Dendritic cell treated with granulocyte-macrophage colony-stimulating factor and Interleukin-4, amounts not matched to agents 40 ng/mL and 50 ng/mL, for 4 days (primary cell): ENCODE measurements at regions of chr13 and their contacts with region 1.

Region 1: GRCh38 chr13:102670130-102670529 is 24.7 kb downstream of the METTL21C start:
- H3K4me3 Mint-ChIP-seq: no peak overlapping the region
- H3K27ac Mint-ChIP-seq: no peak overlapping the region
- H3K4me1 Mint-ChIP-seq: no peaks in the 10 kb centered on the region
- H3K27me3 Mint-ChIP-seq: no peaks in the 10 kb centered on the region

Region 2: DNA sequence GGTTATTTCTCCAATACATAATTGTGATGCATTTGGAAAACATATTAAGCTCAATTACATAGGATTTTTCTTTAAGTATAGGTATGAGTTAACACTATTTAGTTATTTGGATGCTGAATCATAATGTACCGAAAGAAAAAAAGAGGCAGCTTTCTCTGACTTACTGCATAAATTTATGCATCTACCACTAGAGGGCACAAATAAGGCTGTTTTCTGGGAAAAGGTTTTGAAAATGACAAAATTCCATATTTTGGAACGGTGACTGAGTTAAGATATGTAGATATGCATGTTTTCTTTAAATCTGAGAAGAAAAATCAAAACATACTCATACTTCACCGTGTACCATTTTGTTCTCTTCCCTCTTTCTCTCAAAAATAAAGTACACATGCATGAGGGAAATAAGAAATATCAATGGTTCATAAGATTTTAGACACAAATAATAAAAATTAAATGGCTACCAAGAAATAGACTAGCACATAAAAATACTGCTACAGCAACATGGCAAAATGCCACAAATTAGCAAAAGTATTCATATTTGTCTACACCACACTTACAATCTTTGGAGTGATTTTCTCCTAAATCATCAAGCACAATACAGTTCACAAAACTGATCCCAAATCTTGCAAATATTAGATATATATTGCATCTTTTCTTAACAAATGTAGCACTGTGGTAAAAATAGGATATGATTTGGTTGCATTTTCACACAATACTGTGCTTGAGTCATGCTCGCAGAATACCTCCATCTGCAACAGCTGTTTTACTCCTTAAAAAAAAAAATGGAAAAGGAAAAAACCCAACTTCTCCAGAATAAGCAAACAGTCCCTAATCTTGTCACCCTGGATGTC is 528.3 kb before region 1 on chr13:
- intact Hi-C with region 1: no loop called
- H3K4me3 Mint-ChIP-seq: no peak overlapping the region
- H3K27ac Mint-ChIP-seq: no peak overlapping the region
- H3K4me1 Mint-ChIP-seq: no peaks in the 10 kb centered on the region
- H3K27me3 Mint-ChIP-seq: no peaks in the 10 kb centered on the region

Region 3: DNA sequence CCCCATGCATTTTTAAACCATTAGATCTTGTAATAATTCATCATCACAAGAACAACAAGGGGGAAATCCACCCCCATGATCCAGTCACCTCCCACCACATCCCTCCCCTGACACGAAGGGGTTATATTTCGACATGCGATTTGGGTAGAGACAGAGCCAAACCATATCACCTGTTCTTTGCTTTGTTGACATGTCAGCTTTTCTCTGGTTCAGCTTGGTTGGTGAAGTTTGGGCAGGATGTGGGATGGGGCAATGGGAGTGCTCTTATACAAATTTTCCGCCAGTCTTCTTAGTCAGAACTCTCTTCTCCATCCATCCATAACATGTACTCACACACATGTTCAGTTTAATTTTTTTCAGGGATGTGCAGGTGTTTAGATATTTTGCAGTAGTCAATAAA is 60.4 kb before region 1 on chr13:
- intact Hi-C with region 1: loop called (anchors 10 kb)
- H3K4me3 Mint-ChIP-seq: no peak overlapping the region
- H3K27ac Mint-ChIP-seq: no peak overlapping the region
- H3K4me1 Mint-ChIP-seq: peaks cover 56% of the 10 kb centered on the region
- H3K27me3 Mint-ChIP-seq: no peaks in the 10 kb centered on the region

Region 4: DNA sequence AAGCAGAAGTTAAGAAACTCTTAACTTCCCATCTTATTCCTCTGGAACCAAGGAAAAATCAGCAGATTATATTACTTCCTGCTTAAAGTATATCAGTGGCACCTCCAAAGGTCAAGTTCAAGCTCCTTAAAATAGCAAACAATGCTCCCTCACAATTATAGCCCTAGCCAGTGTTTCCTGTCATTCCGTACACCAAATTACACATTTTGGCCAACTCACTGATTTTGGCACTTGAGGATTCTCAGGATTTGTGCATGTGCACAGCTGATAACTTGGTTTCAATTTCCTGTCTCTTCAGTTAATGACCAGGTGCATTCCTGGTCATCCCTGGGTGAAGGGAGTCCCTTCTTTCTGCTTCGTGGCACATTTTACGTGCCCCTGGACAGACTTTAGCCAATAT is 31.4 kb before region 1 on chr13:
- intact Hi-C with region 1: loop called (anchors 5 kb)
- H3K4me3 Mint-ChIP-seq: no peak overlapping the region
- H3K27ac Mint-ChIP-seq: peak overlapping the region; percentile 6
- H3K4me1 Mint-ChIP-seq: peaks cover 8% of the 10 kb centered on the region
- H3K27me3 Mint-ChIP-seq: no peaks in the 10 kb centered on the region